HCT116 (cell line): ENCODE measurements at regions of chr18 and their contacts with region 1.

Region 1: GRCh38 chr18:25351777-25352628 is at the start of gene ZNF521:
- DNase-seq: peak; percentile 18
- ATAC-seq: peak; percentile 95
- H3K4me3 ChIP-seq: peak within 1 kb of the TSS; percentile 43 to 59
- H3K27ac ChIP-seq: no peak within 1 kb of the TSS
- H3K4me1 ChIP-seq: peaks cover 0 to 8% of the 10 kb centered on the region in 2 experiments; a peak in 1 of 4 replicates
- H3K27me3 ChIP-seq: peaks cover 30% of the 10 kb centered on the region
- CTCF ChIP-seq: peak in 1 of 3 experiments; percentile 11; a peak in 1 of 6 replicates
- POLR2A ChIP-seq: no peak
- RAD21 ChIP-seq: no peak
- total RNA-seq, gene ZNF521: 0.10 TPM

Region 2: DNA sequence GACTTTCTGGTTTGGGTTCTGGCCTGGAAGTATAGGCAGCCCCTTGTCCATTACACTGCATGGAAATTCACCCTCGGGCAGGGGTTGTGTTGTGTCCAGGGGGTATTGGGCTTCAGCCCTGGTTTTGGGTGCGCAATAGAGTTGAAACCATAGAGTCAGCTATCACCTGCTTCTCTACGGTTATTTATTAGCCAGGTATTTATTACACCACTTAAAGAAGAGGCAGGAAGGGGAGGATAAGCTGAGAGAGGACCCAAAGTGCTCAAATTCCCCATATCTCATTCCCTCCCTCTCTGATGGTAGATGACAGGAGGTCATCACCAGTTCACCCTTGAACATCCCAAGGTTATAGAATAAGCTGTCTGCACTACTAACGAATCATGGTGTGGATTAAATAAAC is 758.1 kb before region 1 on chr18:
- CTCF ChIA-PET with region 1: no interaction called
- POLR2A ChIA-PET with region 1: no interaction called
- RAD21 ChIA-PET with region 1: no interaction called
- intact Hi-C with region 1: loop called (anchors 5 kb)
- DNase-seq: no peak
- ATAC-seq: no peak
- H3K4me3 ChIP-seq: no peak overlapping the region
- H3K27ac ChIP-seq: no peak overlapping the region
- H3K4me1 ChIP-seq: no peaks in the 10 kb centered on the region
- H3K27me3 ChIP-seq: peaks cover 30% of the 10 kb centered on the region; the same call in 1 of the 2 replicates
- CTCF ChIP-seq: no peak
- POLR2A ChIP-seq: no peak
- RAD21 ChIP-seq: no peak

Region 3: GRCh38 chr18:25503567-25504081 is 151.6 kb after region 1 on chr18:
- CTCF ChIA-PET with region 1: no interaction called
- POLR2A ChIA-PET with region 1: no interaction called
- RAD21 ChIA-PET with region 1: no interaction called
- intact Hi-C with region 1: loop called (anchors 5 kb)
- DNase-seq: peak; percentile 12
- ATAC-seq: peak; percentile 62
- H3K4me3 ChIP-seq: no peak overlapping the region
- H3K27ac ChIP-seq: no peak overlapping the region
- H3K4me1 ChIP-seq: no peaks in the 10 kb centered on the region
- H3K27me3 ChIP-seq: peaks cover 5% of the 10 kb centered on the region; the same call in 1 of the 2 replicates
- CTCF ChIP-seq: no peak
- POLR2A ChIP-seq: no peak
- RAD21 ChIP-seq: no peak